Heart right ventricle (tissue), 16 donors: ENCODE measurements at regions of chr15 and their contacts with region 1.

Region 1: GRCh38 chr15:98647774-98648653 is at the start of gene IGF1R:
- DNase-seq: peak; percentile 85 to 88
- ATAC-seq: peak; percentile 70 to 89 (median 80)
- H3K4me3 ChIP-seq: peak within 1 kb of the TSS; percentile 81 to 93 (median 89)
- H3K27ac ChIP-seq: peak within 1 kb of the TSS; percentile 89 to 95 (median 92)
- H3K4me1 ChIP-seq: peaks cover 0 to 40% (median 25%) of the 10 kb centered on the region in 9 donors
- H3K27me3 ChIP-seq: peaks cover 0 to 77% (median 39%) of the 10 kb centered on the region in 7 donors
- CTCF ChIP-seq: peak in 5 of 9 donors; percentile 4 to 37 (median 29)
- total RNA-seq, gene IGF1R: 32.3 to 88.2 (median 50.0) TPM

Region 2: GRCh38 chr15:98518823-98519561 is 129.0 kb before region 1 on chr15:
- intact Hi-C with region 1: loop called in 9 of 10 experiments (anchors 2 to 10 kb)
- DNase-seq: peak in 1 of 2 donors; percentile 59
- ATAC-seq: peak; percentile 77 to 88 (median 82)
- H3K4me3 ChIP-seq: no peak overlapping the region
- H3K27ac ChIP-seq: no peak overlapping the region
- H3K4me1 ChIP-seq: peaks cover 0 to 6% (median 0%) of the 10 kb centered on the region in 9 donors
- H3K27me3 ChIP-seq: peaks cover 0 to 11% (median 0%) of the 10 kb centered on the region in 7 donors
- CTCF ChIP-seq: peak; percentile 76 to 89 (median 79)

Region 3: DNA sequence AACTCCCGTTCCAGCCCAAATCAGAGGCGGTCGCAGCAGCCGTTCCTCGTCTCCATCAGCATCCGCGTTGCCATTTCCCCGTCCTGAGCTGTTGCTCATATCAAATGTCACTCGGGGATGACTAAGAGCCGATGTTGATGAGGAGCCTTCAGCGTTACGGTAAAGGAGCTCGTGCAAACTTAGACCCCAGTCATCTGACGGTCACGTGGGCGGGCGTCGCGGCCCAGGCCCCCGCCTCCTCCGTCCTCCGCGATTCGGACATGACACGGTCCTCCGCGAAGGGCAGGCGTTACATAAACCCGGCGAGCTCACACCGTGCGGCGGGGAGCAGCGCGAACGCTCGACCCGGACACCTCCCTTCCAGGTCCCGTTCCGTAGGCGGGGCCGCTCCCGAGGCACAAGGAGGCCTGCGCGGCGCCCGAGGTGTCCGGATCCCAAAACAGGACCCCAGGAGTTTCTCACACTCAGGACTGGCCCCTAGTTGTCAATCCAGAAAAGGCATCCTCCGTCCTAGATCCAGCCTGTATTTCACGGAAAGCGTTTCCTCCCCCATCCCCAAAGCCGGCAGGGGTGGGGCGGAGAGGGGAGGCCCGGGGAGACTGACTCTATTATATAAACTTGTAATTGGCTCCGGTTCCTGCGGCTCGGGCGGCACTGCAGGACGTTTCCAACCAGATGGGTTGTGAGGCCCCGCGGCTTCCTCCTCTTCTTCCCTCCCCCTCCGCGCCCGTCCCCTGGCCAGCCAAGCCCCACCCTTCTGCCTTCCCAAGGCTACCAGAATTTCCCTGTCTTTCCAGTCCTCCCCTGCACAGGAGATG is 99.7 kb before region 1 on chr15:
- intact Hi-C with region 1: loop called in 1 of 10 experiments (anchors 10 kb)
- DNase-seq: peak; percentile 61 to 70
- ATAC-seq: peak; percentile 87 to 93 (median 90)
- H3K4me3 ChIP-seq: peak overlapping the region; percentile 34 to 67 (median 58)
- H3K27ac ChIP-seq: peak overlapping the region in 8 of 10 donors; percentile 39 to 81 (median 70)
- H3K4me1 ChIP-seq: peaks cover 0 to 19% (median 17%) of the 10 kb centered on the region in 9 donors
- H3K27me3 ChIP-seq: peaks cover 0 to 40% (median 25%) of the 10 kb centered on the region in 7 donors
- CTCF ChIP-seq: peak in 5 of 9 donors; percentile 14 to 37 (median 20)

Region 4: DNA sequence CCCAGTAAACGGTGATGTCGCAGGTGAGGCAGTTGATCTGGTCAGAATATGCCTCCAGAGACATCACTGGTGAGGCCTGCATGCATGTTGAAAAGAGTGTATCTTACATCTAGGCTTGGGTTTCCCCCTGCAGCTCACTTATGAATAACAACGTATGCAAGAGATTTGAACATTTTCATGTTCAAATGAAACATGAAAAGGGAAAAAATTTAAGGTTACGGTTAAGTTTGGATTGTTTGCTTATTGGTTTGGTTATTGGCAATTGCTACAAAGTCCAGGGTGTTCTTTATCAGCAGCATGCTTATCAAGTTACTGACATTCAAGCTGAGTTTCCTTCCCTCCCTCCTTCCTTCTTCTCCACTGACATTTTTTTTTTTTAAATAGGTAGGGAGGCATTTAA is 123.5 kb after region 1 on chr15:
- intact Hi-C with region 1: loop called in 3 of 10 experiments (anchors 5 kb)
- DNase-seq: no peak
- ATAC-seq: peak in 1 of 8 donors; percentile 45
- H3K4me3 ChIP-seq: no peak overlapping the region
- H3K27ac ChIP-seq: peak overlapping the region in 1 of 10 donors; percentile 19
- H3K4me1 ChIP-seq: peaks cover 3 to 82% (median 49%) of the 10 kb centered on the region in 9 donors
- H3K27me3 ChIP-seq: no peaks in the 10 kb centered on the region
- CTCF ChIP-seq: peak in 1 of 9 donors; percentile 24

Region 5: DNA sequence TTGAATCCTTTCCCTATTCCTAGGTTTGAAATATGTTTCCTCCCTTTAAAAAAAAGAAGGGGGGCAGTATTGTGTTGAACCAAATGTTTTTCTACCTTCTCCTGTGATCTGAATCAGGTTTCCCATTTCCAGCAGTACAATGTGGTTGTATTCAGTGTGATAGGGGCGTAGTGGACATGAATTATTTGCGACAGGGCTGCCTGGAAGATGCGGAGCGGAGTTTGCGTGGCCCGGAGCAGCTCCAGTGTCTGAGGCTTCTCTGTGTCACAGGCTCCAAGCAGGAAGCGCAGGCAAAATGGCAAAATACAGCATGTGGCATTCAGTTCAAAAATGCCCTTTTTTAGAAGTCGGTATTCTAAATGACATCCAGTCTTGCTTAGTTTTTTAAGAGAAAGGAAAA is 205.1 kb after region 1 on chr15:
- intact Hi-C with region 1: loop called in 2 of 10 experiments (anchors 1 kb)
- DNase-seq: peak; percentile 89 to 90
- ATAC-seq: peak; percentile 80 to 96 (median 88)
- H3K4me3 ChIP-seq: peak overlapping the region; percentile 30 to 80 (median 64)
- H3K27ac ChIP-seq: peak overlapping the region; percentile 56 to 90 (median 86)
- H3K4me1 ChIP-seq: peaks cover 23 to 85% (median 58%) of the 10 kb centered on the region in 9 donors
- H3K27me3 ChIP-seq: no peaks in the 10 kb centered on the region
- CTCF ChIP-seq: peak in 1 of 9 donors; percentile 21

Region 6: DNA sequence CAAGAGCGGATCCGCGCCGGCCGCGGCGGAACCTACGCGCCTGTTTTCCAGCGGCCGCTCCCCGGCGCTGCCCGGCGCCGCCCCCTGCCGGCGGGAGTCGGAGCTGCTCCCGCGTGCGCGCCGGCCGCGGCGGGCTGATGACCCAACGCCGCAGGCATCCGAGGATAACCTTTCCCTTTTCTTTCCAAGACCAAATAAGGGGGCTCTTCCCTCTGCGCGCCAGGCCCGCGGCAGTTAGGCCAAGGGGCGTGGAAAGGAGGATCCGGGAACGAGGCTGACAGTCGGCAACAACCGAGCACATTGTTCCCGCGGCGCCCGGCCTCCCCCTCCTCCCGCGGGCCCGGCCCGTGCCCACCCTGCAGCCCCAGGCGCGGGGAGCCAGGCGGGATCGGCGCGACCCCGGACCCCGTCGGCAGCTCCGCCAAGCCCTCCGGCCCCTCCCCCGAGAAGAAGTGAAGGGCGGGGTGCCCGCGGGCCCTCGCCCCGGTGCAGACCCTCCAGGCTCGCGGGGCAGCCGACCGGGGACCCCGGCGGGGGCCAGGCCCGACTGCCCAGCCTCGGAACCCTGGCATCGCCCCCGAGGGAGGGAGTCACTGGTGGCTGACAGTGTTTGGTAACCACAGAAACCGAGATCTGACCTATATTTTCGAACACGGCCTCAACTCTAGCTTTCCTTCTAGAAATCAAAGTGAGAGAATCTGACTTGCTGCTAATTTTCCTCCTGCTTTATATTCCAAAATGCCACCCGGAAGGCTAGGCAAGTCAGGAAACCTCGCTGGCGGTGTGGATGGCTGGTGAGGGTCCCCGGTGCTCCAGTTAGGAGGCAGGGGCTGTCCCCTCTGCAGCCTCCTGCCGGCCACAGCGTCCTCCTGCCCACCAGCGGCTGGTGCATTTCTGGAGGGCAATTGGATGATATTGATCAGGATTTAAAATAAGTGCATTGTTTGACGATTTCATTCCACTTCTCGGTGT is 411.3 kb after region 1 on chr15:
- intact Hi-C with region 1: loop called in 7 of 10 experiments (anchors 5 to 10 kb)
- DNase-seq: peak; percentile 75 to 85
- ATAC-seq: peak; percentile 74 to 96 (median 87)
- H3K4me3 ChIP-seq: peak overlapping the region; percentile 30 to 65 (median 58)
- H3K27ac ChIP-seq: peak overlapping the region; percentile 43 to 91 (median 80)
- H3K4me1 ChIP-seq: peaks cover 5 to 30% (median 19%) of the 10 kb centered on the region in 9 donors
- H3K27me3 ChIP-seq: peaks cover 0 to 35% (median 0%) of the 10 kb centered on the region in 7 donors
- CTCF ChIP-seq: peak; percentile 62 to 84 (median 81)

Region 7: DNA sequence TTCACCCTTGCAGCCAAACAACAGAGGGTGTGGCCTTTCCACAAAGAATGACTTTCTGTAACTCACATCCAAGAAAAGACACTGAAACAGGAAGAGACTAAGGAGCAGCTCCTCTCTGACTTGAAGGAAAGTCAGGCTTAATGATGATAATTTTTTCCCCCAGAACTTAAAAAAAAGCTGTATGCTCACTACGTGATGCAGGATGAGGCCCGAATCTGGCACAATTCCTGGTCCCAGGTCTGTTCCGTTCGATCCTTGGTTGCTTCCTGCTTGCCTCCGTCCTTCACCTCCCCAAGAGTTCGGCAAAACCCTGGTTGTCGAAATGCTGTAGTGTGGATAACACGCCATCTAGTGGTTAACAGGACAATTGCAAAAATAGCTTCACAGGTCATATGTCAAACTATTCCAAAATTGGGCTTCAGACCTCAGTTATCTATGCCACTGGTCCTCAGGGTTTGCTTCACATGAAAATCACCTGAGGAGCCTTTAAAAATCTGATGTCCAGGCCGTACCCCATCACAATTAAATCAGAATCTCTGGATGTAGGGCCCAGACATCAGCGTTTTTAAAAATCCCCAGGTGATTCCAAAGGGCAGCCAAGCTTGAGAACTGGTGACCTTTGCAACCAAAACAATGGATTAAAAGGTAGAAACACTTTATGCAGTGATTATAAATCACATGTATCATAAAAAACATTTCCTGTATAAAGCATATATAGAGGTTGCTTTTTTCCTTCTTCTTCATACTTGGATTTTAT is 428.7 kb after region 1 on chr15:
- intact Hi-C with region 1: loop called in 3 of 10 experiments (anchors 5 to 10 kb)
- DNase-seq: peak in 1 of 2 donors; percentile 73
- ATAC-seq: peak; percentile 84 to 91 (median 87)
- H3K4me3 ChIP-seq: peak overlapping the region in 8 of 10 donors; percentile 11 to 50 (median 44)
- H3K27ac ChIP-seq: peak overlapping the region in 1 of 10 donors; percentile 66
- H3K4me1 ChIP-seq: peaks cover 0 to 9% (median 0%) of the 10 kb centered on the region in 9 donors
- H3K27me3 ChIP-seq: peaks cover 0 to 3% (median 0%) of the 10 kb centered on the region in 7 donors
- CTCF ChIP-seq: peak; percentile 78 to 92 (median 91)